ENCODE measurements at regions of chr7 and their contacts with region 1.

Region 1: GRCh38 chr7:44200647-44201461 is at the start of gene YKT6:
- DNase-seq: peak; percentile 88
- H3K4me3 ChIP-seq: peak within 1 kb of the TSS; percentile 82 to 99 (median 90)
- H3K27ac ChIP-seq: no peak within 1 kb of the TSS
- H3K4me1 ChIP-seq: peaks cover 0 to 2% (median 0%) of the 10 kb centered on the region in 4 experiments; a peak in 1 of 7 replicates
- H3K27me3 ChIP-seq: peaks cover 0 to 3% (median under 1%) of the 10 kb centered on the region in 4 experiments; a peak in 2 of 7 replicates
- CTCF ChIP-seq: peak; percentile 34 to 59 (median 52)
- EP300 ChIP-seq: no peak
- POLR2A ChIP-seq: peak in 1 of 2 experiments; percentile 70; a peak in 2 of 3 replicates
- RAD21 ChIP-seq: peak in 1 of 2 experiments; percentile 48; a peak in 3 of 4 replicates
- total RNA-seq, gene YKT6: 103 and 108 TPM in 2 replicates

Region 2: GRCh38 chr7:44123190-44124003 is 77.5 kb before region 1 on chr7 and contains the start of gene POLD2:
- CTCF ChIA-PET with region 1: interaction called, 27 read pairs
- POLR2A ChIA-PET with region 1: interaction called, 3 read pairs
- DNase-seq: peak; percentile 73 to 96
- H3K4me3 ChIP-seq: peak within 1 kb of the TSS; percentile 74 to 85 (median 76)
- H3K27ac ChIP-seq: peak within 1 kb of the TSS; percentile 70; the same call in 1 of the 2 replicates
- H3K4me1 ChIP-seq: peaks cover 0 to 7% (median 3%) of the 10 kb centered on the region in 4 experiments; a peak in 4 of 7 replicates
- H3K27me3 ChIP-seq: peaks cover 0 to 4% (median under 1%) of the 10 kb centered on the region in 4 experiments; a peak in 4 of 7 replicates
- CTCF ChIP-seq: no peak
- EP300 ChIP-seq: no peak
- POLR2A ChIP-seq: peak in 1 of 2 experiments; percentile 71; a peak in 2 of 3 replicates
- RAD21 ChIP-seq: no peak
- total RNA-seq, gene POLD2: 148 TPM in 2 replicates

Region 3: GRCh38 chr7:44131173-44132029 is 69.5 kb before region 1 on chr7:
- CTCF ChIA-PET with region 1: interaction called, 45 read pairs
- POLR2A ChIA-PET with region 1: no interaction called
- DNase-seq: no peak
- H3K4me3 ChIP-seq: no peak overlapping the region
- H3K27ac ChIP-seq: no peak overlapping the region
- H3K4me1 ChIP-seq: peaks cover 0 to 12% (median 3%) of the 10 kb centered on the region in 4 experiments; a peak in 4 of 7 replicates
- H3K27me3 ChIP-seq: peaks cover 0 to 16% (median 6%) of the 10 kb centered on the region in 4 experiments; a peak in 6 of 7 replicates
- CTCF ChIP-seq: peak; percentile 66 to 75 (median 68)
- EP300 ChIP-seq: no peak
- POLR2A ChIP-seq: no peak
- RAD21 ChIP-seq: peak; percentile 71 to 83

Region 4: DNA sequence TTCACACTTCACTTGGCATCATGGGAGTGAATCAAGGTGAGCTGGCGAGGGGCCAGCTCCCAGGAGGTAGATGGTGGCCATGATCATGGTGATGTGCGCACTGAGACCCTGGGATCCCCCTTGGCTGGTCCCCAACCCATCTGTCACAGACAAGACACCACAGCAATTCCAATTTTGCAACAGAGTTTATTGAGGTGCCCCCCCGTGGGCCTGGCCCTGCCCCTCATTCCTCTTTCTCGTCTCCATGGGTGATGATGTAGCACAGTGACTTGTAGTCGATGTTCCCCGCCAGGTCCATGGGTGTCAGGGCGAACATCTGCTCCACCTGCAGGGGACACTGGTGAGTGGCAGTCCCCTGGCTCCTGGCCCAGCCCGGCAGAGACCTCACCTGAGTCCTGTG is 62.2 kb before region 1 on chr7:
- CTCF ChIA-PET with region 1: interaction called, 11 read pairs
- POLR2A ChIA-PET with region 1: no interaction called
- DNase-seq: no peak
- H3K4me3 ChIP-seq: no peak overlapping the region
- H3K27ac ChIP-seq: no peak overlapping the region
- H3K4me1 ChIP-seq: no peaks in the 10 kb centered on the region
- H3K27me3 ChIP-seq: peaks cover 0 to under 1% (median 0%) of the 10 kb centered on the region in 4 experiments; a peak in 2 of 7 replicates
- CTCF ChIP-seq: peak in 1 of 3 experiments; percentile 24; a peak in 2 of 4 replicates
- EP300 ChIP-seq: no peak
- POLR2A ChIP-seq: no peak
- RAD21 ChIP-seq: peak in 1 of 2 experiments; percentile 6; a peak in 1 of 4 replicates

Region 5: DNA sequence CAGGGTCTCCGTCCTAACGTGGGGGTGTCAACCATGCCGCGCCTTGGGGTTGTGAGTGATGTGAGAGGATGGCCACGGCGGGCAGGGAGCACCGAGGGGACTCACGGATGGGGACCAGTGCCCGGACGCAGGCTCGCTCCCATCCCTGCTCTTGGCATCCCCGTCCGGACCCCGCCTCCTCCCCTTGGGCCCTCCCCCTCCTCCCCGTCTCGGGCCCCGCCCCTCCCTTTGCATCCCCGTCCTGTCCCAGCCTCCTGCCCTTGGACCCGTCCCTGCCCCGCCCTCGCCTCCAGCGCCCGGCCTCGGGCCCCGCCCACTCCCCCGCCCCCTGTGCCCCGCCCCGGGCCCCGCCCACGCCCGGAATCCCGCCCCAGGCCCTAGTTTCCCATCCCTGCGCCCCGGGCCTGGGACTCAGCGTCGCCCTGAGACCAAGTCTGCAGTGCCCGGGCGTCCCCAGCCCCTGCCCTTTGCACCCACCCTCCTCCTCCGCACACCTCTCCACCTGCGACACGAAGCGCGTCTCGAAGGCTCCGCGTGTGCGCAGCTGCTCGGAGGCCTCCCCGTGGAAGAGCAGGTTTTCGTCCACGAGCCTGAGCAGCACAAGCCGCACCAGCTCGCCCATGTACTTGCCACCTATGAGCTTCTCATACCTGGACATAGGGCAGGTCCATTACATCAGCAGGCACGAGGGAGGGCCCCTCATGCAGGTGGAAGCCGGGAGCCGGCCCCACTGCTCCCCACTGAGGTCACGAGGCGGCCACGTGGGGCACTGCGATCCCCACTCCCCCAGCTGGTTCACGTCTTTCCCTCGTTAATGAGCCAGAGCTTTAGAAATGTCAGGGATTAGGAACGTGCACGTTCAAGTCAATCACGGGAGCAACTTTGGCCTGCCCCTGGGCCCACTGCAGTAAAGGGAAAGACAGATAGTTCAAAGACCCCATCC is 54.6 kb before region 1 on chr7:
- CTCF ChIA-PET with region 1: interaction called, 46 read pairs
- POLR2A ChIA-PET with region 1: interaction called, 3 read pairs
- DNase-seq: peak; percentile 76 to 92
- H3K4me3 ChIP-seq: peak overlapping the region; percentile 12 to 68 (median 33); a peak in 7 of 8 replicates
- H3K27ac ChIP-seq: no peak overlapping the region
- H3K4me1 ChIP-seq: peaks cover 0 to 20% (median 8%) of the 10 kb centered on the region in 4 experiments; a peak in 4 of 7 replicates
- H3K27me3 ChIP-seq: peaks cover 13 to 27% (median 22%) of the 10 kb centered on the region in 4 experiments
- CTCF ChIP-seq: no peak
- EP300 ChIP-seq: no peak
- POLR2A ChIP-seq: no peak
- RAD21 ChIP-seq: no peak

Region 6: GRCh38 chr7:44218418-44219201 is 17.8 kb after region 1 on chr7:
- CTCF ChIA-PET with region 1: interaction called, 11 read pairs
- POLR2A ChIA-PET with region 1: interaction called, 3 read pairs
- DNase-seq: peak; percentile 57 to 79
- H3K4me3 ChIP-seq: peak overlapping the region in 1 of 4 experiments; percentile 19; a peak in 1 of 8 replicates
- H3K27ac ChIP-seq: no peak overlapping the region
- H3K4me1 ChIP-seq: peaks cover 0 to 24% (median 19%) of the 10 kb centered on the region in 4 experiments; a peak in 6 of 7 replicates
- H3K27me3 ChIP-seq: no peaks in the 10 kb centered on the region
- CTCF ChIP-seq: peak in 2 of 3 experiments; percentile 41 to 42; a peak in 2 of 4 replicates
- EP300 ChIP-seq: no peak
- POLR2A ChIP-seq: no peak
- RAD21 ChIP-seq: peak in 1 of 2 experiments; percentile 31; a peak in 3 of 4 replicates